Psoas muscle (tissue), 8 donors: ENCODE measurements at regions of chr16 and their contacts with region 1.

Region 1: GRCh38 chr16:49503256-49504022 is 129.8 kb downstream of the C16orf78 start:
- DNase-seq: peak in 1 of 2 donors; percentile 48
- ATAC-seq: no peak
- H3K4me3 ChIP-seq: no peak overlapping the region
- H3K27ac ChIP-seq: no peak overlapping the region
- H3K4me1 ChIP-seq: no peaks in the 10 kb centered on the region
- H3K27me3 ChIP-seq: no peaks in the 10 kb centered on the region
- CTCF ChIP-seq: no peak

Region 2: DNA sequence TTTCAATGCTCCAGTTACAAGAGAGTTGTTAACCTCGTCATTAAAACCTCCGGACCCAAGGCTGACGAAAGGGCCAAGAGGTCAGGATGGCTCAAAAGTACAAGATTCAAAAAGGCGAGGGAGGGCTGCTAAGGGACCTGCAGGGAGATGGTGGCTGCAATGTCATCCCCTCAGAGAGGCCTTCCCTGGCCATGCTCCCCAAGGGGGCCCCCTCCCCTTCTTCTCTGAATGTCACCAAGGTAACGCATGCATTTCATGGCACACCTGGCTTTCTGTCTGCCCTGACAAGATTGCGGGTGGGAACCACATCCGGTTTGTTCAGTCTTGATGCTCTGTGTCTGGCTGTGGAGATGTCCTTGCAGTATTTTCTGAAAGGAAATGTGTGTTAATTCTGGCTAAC is 39.9 kb before region 1 on chr16:
- intact Hi-C with region 1: no loop called
- DNase-seq: peak in 1 of 2 donors; percentile 26
- ATAC-seq: no peak
- H3K4me3 ChIP-seq: no peak overlapping the region
- H3K27ac ChIP-seq: no peak overlapping the region
- H3K4me1 ChIP-seq: no peaks in the 10 kb centered on the region
- H3K27me3 ChIP-seq: no peaks in the 10 kb centered on the region
- CTCF ChIP-seq: no peak

Region 3: DNA sequence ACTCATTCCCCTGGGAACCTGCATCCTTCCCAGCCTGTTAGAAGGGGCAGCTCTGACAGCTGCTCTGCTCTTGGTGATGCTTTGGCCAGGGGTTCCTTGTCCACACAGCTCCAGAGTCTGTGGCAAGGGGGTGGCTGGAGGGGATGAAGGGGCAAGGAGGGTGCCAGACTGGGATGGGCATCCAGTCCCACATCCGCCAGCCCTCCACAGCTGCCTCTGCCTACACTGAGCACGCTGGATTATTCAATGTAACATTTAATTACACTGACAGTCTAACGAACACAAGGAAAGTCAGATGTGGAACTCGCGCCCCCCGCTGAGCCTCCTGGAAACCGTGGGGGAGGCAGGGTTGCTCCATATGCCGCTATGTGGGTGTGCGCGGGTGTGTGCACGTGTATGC is 28.7 kb before region 1 on chr16:
- intact Hi-C with region 1: loop called in 1 of 2 experiments (anchors 1 kb)
- DNase-seq: peak in 1 of 2 donors; percentile 39
- ATAC-seq: no peak
- H3K4me3 ChIP-seq: no peak overlapping the region
- H3K27ac ChIP-seq: no peak overlapping the region
- H3K4me1 ChIP-seq: no peaks in the 10 kb centered on the region
- H3K27me3 ChIP-seq: peaks cover 0 to 3% (median 0%) of the 10 kb centered on the region in 3 donors
- CTCF ChIP-seq: no peak